Adrenal gland (tissue), 19 donors: ENCODE measurements at regions of chr1 and their contacts with region 1.

Region 1: DNA sequence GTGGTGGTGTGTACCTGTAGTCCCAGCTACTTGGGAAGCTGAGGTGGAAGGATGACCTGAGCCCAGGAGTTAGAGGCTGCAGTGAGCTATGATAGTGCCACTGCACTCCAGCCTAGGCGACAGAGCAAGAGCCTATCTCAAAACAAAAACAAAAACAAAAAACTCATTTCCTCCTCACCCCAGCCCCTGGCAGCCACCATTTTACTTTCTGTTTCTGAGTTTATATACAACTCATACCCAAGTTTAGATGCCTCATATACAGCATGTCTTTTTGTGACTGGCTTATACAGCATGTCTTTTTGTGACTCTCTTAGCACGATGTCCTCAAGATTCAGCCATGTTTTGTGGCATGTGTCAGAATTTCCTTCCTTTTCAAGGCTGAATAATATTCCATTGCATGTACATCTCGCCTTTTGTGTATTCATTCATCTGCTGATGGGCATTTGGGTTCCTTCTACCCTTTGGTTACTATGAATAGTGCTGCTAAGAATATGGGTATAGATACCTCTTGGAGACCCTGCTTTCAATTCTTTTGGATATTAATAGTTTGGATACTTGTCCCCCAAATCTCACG is 14.7 kb downstream of the COA7 start:
- DNase-seq: no peak
- H3K4me3 ChIP-seq: no peak overlapping the region
- H3K27ac ChIP-seq: no peak overlapping the region
- H3K4me1 ChIP-seq: no peaks in the 10 kb centered on the region
- H3K27me3 ChIP-seq: no peaks in the 10 kb centered on the region
- CTCF ChIP-seq: no peak
- POLR2A ChIP-seq: no peak

Region 2: DNA sequence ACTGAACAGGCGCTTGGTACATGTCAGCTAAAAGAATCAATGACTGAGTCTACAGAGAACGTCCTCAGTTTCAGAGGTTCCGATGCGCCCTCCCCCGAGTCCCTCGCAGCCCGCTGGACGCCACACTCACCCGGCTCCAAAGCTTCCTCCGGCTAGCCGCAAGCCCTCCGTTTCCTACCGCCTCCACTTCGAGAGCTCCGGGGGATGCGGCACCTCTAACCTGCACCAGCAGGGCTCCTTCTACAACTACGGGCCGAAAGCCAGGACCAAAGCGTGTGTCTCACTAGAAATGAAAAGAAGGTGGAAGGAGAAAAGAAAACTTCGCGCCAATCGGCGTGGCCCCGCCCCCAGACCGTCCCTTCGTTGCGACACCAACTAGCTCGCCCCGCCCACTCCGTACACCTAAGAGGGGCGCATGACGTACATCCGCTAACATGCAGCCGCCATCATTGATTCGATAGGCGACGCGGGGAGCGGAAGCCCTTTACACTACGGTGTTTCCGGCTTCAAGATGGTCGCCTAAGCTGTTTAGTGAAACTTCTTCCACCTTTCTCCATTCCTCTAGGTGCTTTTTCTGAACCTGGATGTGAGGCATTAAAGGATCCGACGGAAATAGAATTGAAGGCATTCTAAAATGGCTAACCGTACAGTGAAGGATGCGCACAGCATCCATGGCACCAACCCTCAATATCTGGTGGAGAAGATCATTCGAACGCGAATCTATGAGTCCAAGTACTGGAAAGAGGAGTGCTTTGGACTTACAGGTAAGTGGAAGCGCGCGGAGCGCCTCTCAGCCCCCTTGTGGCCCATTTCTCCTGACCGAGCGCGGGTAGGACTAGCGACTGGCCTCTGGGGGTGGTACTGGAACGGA is 279.1 kb before region 1 on chr1 and contains the starts of genes ORC1 and PRPF38A:
- intact Hi-C with region 1: loop called in 1 of 2 experiments (anchors 10 kb)
- DNase-seq: peak; percentile 97 to 99 (median 98)
- H3K4me3 ChIP-seq: peak within 1 kb of the TSS; percentile 73 to 89 (median 86)
- H3K27ac ChIP-seq: peak within 1 kb of the TSS; percentile 72 to 96 (median 84)
- H3K4me1 ChIP-seq: peaks cover 9 to 22% of the 10 kb centered on the region in 2 donors
- H3K27me3 ChIP-seq: no peaks in the 10 kb centered on the region
- CTCF ChIP-seq: peak; percentile 9 to 81 (median 52)
- POLR2A ChIP-seq: peak; percentile 33 to 67
- total RNA-seq, gene ORC1: 0.68 to 3.7 (median 0.92) TPM in 7 of 9 donors, not detected in the others
- total RNA-seq, gene PRPF38A: 5.1 to 33.7 (median 20.2) TPM

Region 3: DNA sequence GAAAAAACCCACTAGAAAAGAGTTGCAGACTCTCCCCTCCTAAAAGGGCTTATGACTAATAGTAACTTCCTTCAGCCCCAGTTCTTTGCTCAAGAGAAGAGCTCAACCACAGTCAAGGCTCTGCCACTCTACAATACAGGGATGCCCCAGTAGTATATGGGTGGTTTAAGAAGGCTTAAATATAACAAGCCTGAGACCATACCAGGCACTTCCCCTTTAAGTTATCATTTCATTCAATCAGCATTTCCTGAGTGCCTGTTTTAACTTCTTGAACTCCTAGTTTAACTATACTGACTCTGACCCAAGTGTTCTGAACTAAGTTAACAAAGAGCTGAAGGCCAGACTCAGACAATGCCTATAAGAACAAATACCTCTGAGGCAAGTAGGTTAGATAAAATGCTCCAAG is 259.2 kb before region 1 on chr1:
- intact Hi-C with region 1: no loop called
- DNase-seq: no peak
- H3K4me3 ChIP-seq: no peak overlapping the region
- H3K27ac ChIP-seq: no peak overlapping the region
- H3K4me1 ChIP-seq: no peaks in the 10 kb centered on the region
- H3K27me3 ChIP-seq: no peaks in the 10 kb centered on the region
- CTCF ChIP-seq: no peak
- POLR2A ChIP-seq: no peak

Region 4: DNA sequence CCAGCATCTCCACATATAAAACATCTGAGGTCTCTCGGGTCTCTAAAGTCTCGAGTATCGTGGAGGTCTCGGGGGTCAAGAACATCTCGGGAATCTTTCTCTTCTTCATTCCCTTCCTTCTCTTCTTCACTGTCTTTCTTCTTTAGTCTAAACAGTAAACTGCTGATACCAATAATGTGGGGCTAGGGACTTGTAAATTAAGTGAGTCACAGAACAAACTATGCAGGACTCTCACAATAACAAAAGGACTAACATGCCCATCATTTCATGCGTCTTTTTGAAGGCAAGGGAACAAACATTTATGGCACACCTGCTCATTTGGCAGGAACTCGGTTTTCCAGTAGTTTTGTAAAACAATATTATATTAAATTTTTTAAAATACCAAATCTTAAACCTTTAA is 246.6 kb before region 1 on chr1:
- intact Hi-C with region 1: loop called in 1 of 2 experiments (anchors 10 kb)
- DNase-seq: no peak
- H3K4me3 ChIP-seq: no peak overlapping the region
- H3K27ac ChIP-seq: no peak overlapping the region
- H3K4me1 ChIP-seq: no peaks in the 10 kb centered on the region
- H3K27me3 ChIP-seq: no peaks in the 10 kb centered on the region
- CTCF ChIP-seq: no peak
- POLR2A ChIP-seq: no peak